ENCODE measurements at regions of chr3 and their contacts with region 1.

Region 1: DNA sequence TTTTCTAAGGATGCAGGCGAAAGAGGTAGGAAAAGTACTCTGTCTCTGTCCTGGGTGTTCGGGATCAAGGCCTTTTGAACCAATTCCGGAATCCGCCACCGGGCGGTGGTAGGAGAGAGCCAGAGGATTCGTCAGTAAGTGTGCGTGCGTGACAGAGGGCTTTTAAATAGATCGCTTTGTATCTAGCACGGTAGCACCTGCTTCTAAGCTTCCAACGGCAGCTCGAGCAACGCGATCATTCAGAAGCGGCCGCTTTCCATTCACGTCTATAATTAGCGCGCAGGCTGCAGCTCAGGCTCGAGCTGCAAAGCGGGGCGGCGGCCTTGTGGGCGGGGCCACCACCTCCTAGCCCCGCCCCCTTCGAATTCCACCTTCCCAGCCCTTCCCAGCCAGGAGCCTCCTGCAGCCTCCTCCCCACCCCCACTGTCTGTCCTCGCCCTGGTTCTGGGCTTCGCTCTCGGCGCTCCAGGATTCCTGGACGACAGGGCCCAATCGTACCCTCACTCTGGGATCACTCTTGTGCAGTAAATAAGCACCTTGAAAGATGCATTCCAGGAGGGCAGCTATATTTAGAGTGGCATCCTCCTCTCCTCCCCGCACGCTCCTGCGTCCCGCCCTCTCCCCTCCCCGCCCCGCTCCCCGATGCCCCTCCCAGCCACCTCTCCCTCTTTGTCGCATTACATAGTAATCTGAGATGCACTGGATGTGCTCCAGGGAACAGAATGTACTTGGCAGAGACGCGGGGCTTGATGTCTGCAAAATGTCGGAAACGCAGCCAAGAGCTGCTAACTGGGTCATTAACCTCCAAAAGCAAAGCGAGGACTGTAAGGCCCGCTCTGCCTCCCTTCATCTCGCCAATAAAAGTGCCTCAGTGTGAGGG is 224.1 kb upstream of the TPRG1 start:
- DNase-seq: peak; percentile 76 to 99
- H3K4me3 ChIP-seq: peak overlapping the region; percentile 57 to 64
- H3K27ac ChIP-seq: peak overlapping the region; percentile 98 to 99
- H3K4me1 ChIP-seq: peaks cover 32 to 74% of the 10 kb centered on the region in 2 donors
- H3K27me3 ChIP-seq: no peaks in the 10 kb centered on the region
- CTCF ChIP-seq: peak; percentile 30 to 45 (median 44)

Region 2: DNA sequence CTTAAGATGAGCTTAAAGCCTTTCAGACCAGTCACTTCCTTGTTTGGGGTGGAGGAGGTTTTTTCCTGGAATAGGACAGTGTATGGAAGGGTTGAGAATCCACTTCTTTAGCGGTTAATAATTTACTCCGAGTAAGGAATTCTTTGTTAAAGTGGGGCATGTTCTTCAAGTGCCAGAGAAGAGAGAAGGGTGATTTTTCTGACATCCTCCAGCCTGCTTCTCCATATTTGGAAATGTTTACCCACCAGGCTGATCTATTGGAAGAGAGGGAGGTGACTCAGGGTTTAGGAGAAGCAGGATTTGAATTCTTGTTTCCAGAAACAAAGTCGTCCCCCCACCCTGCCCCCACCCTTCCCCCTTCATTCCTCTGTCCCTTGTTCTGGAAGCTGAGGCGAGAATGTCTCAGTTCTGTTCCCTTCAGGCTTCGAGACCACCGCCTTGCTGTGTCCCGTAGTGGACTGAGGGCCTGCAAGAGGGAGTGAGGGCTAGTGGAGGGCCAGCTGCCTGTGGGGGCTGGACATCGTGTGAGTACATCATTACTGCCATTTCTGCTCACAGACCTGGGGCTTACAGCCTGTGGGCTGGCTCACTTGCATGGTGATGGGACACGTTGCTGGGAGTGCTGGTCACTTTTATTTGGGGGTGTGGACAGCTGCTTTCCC is 735.2 kb before region 1 on chr3:
- intact Hi-C with region 1: loop called (anchors 5 kb)
- DNase-seq: peak in 1 of 2 donors; percentile 82
- H3K4me3 ChIP-seq: peak overlapping the region; percentile 49 to 63
- H3K27ac ChIP-seq: peak overlapping the region; percentile 92 to 96
- H3K4me1 ChIP-seq: peaks cover 17 to 33% of the 10 kb centered on the region in 2 donors
- H3K27me3 ChIP-seq: no peaks in the 10 kb centered on the region
- CTCF ChIP-seq: no peak

Region 3: DNA sequence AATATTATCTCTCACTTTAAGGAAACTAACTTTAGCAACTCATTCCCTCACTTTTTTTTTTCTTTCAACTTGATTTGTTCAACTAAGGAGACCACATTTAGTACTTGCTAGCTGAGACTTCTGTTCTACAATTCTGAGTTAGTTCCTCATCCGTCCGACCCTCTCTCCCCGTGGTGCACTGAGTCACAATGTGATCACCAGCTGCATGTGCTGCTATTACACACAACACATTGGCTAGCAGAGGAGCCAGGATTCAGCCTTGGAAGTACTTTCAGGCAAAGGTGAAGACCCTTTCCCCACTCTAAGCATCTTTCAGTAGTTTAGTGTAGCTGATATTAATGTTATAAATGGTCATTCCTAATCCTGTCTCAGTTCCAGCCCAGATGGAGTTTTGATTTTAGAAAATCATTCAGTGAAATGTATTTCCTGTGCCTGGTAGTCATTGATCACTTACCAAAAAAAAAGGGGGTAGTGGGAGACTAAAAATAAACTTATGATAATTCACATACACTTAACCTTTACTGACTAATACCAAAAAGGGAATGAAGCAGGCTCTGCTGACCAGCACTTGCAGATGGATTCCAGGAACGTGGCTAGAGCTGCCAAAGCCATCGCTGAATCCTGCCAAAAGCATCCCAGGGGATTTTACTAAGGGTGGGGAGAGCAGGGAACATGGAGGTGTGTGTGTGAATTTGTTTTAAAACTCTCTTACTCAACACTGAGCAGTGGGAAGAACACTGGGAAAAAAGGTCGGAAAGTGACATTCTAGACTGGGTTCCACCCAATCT is 368.9 kb before region 1 on chr3:
- intact Hi-C with region 1: loop called (anchors 5 kb)
- DNase-seq: peak; percentile 63 to 94
- H3K4me3 ChIP-seq: no peak overlapping the region
- H3K27ac ChIP-seq: peak overlapping the region; percentile 85
- H3K4me1 ChIP-seq: peaks cover under 1 to 41% of the 10 kb centered on the region in 2 donors
- H3K27me3 ChIP-seq: no peaks in the 10 kb centered on the region
- CTCF ChIP-seq: no peak

Region 4: GRCh38 chr3:188613266-188613665 is 334.4 kb before region 1 on chr3:
- intact Hi-C with region 1: no loop called
- DNase-seq: no peak
- H3K4me3 ChIP-seq: no peak overlapping the region
- H3K27ac ChIP-seq: no peak overlapping the region
- H3K4me1 ChIP-seq: peaks cover 0 to 13% of the 10 kb centered on the region in 2 donors
- H3K27me3 ChIP-seq: no peaks in the 10 kb centered on the region
- CTCF ChIP-seq: no peak

Region 5: DNA sequence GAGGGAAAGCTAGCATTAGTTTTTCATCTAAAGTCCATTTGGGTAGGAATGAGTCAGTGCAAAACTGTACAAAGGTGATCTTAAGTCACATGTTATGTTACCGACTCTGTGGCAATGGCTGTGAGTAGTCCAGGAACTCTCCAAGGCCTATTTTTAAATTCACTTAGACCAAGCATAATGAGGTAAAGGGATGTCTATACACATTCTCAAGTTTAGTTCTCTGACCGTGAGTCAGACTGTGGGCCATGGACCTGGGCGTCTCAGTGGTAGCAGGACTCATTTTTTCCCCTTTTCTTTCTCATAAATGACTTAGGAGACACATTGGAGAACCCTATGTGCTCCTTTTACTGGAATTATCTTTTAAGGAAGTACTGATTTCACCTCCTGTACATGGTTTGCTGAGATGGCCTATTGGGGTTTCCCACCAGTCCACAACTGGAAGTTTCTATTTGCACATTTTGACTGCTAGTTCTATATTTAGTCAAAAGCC is 264.6 kb before region 1 on chr3:
- intact Hi-C with region 1: loop called (anchors 2 kb)
- DNase-seq: peak; percentile 17 to 91
- H3K4me3 ChIP-seq: no peak overlapping the region
- H3K27ac ChIP-seq: peak overlapping the region; percentile 68 to 83
- H3K4me1 ChIP-seq: peaks cover 17 to 48% of the 10 kb centered on the region in 2 donors
- H3K27me3 ChIP-seq: no peaks in the 10 kb centered on the region
- CTCF ChIP-seq: no peak

Region 6: DNA sequence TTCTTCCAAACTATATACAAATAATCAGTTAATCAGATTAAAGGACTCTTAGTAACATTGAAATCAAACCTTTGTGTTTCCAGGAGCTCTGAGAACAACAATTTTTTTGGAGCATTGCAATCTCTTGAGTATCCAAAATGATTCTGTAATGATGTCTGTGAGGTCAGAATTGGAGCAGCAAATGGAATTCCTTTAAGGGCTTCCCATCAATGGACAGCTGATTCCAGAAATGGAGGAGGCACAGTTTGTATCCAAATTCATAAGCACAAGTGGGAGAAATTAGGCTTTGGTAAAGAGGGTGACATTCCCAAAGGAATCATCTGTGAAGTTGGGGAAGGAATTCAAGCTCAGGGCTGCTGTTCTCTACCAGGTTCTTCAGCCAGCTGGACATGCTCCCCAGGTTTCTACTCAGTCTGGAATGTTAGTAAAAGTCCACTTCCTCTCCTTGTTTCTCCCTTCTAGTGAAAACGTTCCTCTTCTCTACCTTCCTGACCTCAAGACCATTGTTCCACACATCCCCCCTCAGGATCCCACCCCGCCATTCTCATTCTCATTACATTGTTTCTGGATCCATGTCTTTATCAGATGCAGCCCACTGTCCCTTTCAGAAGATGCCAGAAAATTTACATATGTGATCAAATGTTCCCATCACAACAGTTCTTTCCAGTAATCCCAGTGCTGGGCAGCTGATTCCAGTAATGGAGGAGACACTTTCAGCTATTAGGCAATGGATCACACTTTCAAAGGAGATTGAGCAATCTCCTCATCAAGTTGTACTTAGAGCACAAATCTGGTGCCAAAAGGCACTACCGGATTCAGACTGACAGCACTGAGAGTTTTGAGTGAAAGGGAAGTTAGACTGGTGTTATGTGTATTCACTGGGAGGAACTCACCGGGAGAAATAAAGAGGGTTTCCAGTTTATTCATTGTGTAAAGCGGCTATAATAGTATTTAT is 167.2 kb before region 1 on chr3:
- intact Hi-C with region 1: loop called (anchors 5 kb)
- DNase-seq: peak in 1 of 2 donors; percentile 75
- H3K4me3 ChIP-seq: no peak overlapping the region
- H3K27ac ChIP-seq: peak overlapping the region; percentile 57 to 58
- H3K4me1 ChIP-seq: peaks cover 3 to 54% of the 10 kb centered on the region in 2 donors
- H3K27me3 ChIP-seq: no peaks in the 10 kb centered on the region
- CTCF ChIP-seq: no peak

Region 7: GRCh38 chr3:188889054-188889491 is 58.6 kb before region 1 on chr3:
- intact Hi-C with region 1: loop called (anchors 2 kb)
- DNase-seq: peak in 1 of 2 donors; percentile 74
- H3K4me3 ChIP-seq: no peak overlapping the region
- H3K27ac ChIP-seq: peak overlapping the region; percentile 56 to 77
- H3K4me1 ChIP-seq: peaks cover 4 to 18% of the 10 kb centered on the region in 2 donors
- H3K27me3 ChIP-seq: no peaks in the 10 kb centered on the region
- CTCF ChIP-seq: no peak

Region 8: GRCh38 chr3:189186101-189186500 is 238.5 kb after region 1 on chr3:
- intact Hi-C with region 1: no loop called
- DNase-seq: peak in 1 of 2 donors; percentile 68
- H3K4me3 ChIP-seq: peak overlapping the region in 1 of 2 donors; percentile 25
- H3K27ac ChIP-seq: peak overlapping the region; percentile 30 to 59
- H3K4me1 ChIP-seq: no peaks in the 10 kb centered on the region
- H3K27me3 ChIP-seq: no peaks in the 10 kb centered on the region
- CTCF ChIP-seq: no peak